Heart right ventricle (tissue), 16 donors: ENCODE measurements at regions of chr5 and their contacts with region 1.

Region 1: DNA sequence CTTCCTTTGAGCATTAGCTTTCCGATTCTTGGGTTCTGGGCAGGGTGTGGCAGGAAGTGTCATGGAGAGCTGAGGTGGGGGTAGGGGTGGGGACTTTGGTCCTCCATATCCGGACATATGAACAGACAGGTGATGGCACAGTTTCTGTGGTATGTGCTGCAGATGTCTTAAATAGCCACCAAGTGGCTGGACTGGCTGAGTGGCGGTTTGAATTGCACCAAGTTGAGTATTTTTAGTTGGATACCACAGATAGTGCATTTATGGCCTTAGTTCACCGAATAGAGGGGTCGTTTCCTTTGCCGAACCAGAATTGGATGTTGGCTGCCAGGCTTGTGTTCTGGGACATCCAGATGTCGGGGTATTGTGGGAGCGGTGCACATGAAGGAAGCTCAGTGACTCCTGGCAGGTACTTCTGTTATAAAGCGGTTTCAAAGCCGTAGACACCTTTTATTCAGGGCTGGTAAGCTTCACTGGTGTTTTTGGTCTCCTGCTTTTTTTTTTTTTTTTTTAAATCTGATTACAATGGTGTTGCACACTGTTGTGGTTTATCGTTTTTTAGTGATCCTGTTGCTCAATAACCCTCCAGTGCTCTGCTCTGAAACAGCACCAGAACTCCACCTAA is 15.1 kb upstream of the TNFAIP8 start:
- DNase-seq: no peak
- ATAC-seq: peak in 2 of 8 donors; percentile 14 to 28
- H3K4me3 ChIP-seq: peak overlapping the region in 1 of 10 donors; percentile 26
- H3K27ac ChIP-seq: peak overlapping the region in 1 of 10 donors; percentile 79
- H3K4me1 ChIP-seq: peaks cover 0 to 98% (median 13%) of the 10 kb centered on the region in 9 donors
- H3K27me3 ChIP-seq: no peaks in the 10 kb centered on the region
- CTCF ChIP-seq: no peak

Region 2: GRCh38 chr5:119389288-119390030 is 48.8 kb after region 1 on chr5:
- intact Hi-C with region 1: loop called in 1 of 10 experiments (anchors 5 kb)
- DNase-seq: no peak
- ATAC-seq: peak in 5 of 8 donors; percentile 39 to 56 (median 41)
- H3K4me3 ChIP-seq: no peak overlapping the region
- H3K27ac ChIP-seq: peak overlapping the region in 3 of 10 donors; percentile 29 to 54 (median 42)
- H3K4me1 ChIP-seq: peaks cover 0 to 89% (median 21%) of the 10 kb centered on the region in 9 donors
- H3K27me3 ChIP-seq: no peaks in the 10 kb centered on the region
- CTCF ChIP-seq: no peak

Region 3: GRCh38 chr5:119452373-119453039 is 111.8 kb after region 1 on chr5 and contains the start of gene HSD17B4:
- intact Hi-C with region 1: no loop called
- DNase-seq: peak; percentile 90 to 92
- ATAC-seq: peak; percentile 96 to 98 (median 97)
- H3K4me3 ChIP-seq: peak within 1 kb of the TSS; percentile 65 to 96 (median 84)
- H3K27ac ChIP-seq: peak within 1 kb of the TSS; percentile 83 to 94 (median 90)
- H3K4me1 ChIP-seq: peaks cover 2 to 28% (median 21%) of the 10 kb centered on the region in 9 donors
- H3K27me3 ChIP-seq: no peaks in the 10 kb centered on the region
- CTCF ChIP-seq: no peak
- total RNA-seq, gene HSD17B4: 193 to 325 (median 216) TPM